ENCODE measurements at regions of chr17 and their contacts with region 1.

Region 1: DNA sequence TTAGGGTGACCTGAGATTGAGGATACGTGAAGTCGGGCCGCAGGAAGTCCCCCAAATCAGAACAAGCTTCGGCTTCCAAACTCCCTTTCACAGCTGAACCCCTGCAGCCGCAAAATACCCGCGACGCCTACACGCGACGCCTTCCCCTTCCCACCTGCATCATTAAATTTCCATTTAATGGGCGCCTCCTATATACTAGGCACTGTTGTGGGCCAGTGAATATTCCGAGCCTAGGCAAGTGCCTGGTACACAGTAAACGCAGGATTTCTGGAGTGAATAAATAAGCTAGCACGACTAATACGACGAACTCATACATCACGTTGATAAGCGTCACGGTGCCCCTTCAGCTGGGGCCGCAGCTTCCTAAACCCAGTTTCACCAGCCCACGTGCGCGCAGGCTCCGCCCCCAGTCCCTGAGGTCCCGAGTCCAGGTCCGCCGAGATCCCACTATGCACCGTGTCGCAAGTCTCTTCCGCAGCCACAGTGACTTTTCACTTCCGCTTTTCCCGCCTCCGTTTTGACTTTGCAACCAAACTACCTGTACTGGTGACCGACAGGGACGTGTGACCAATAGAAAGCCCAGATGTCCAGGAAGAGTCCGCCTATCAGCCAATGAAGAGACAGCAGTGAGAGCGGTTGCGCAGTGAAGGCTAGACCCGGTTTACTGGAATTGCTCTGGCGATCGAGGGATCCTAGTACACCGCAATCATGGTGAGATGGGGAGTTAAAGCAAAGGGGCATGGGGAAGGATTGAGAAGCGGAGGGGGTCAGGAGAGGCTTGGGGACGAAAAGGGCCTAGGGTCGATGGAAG is at the start of gene PSMB3:
- DNase-seq: peak; percentile 76 to 98 (median 96)
- ATAC-seq: peak; percentile 90
- H3K4me3 ChIP-seq: peak within 1 kb of the TSS; percentile 95
- H3K4me3 Mint-ChIP-seq: peak within 1 kb of the TSS; percentile 89 to 100 (median 98)
- H3K27ac ChIP-seq: peak within 1 kb of the TSS; percentile 83
- H3K27ac Mint-ChIP-seq: peak within 1 kb of the TSS; percentile 91 to 99 (median 97)
- H3K4me1 ChIP-seq: peaks cover 31 to 48% of the 10 kb centered on the region in 2 donors
- H3K4me1 Mint-ChIP-seq: peaks cover 37 to 56% (median 44%) of the 10 kb centered on the region in 7 donors
- H3K27me3 ChIP-seq: peaks cover 6 to 9% of the 10 kb centered on the region in 2 donors
- H3K27me3 Mint-ChIP-seq: peaks cover 12 to 32% (median 20%) of the 10 kb centered on the region in 5 donors
- total RNA-seq, gene PSMB3: 60.8 to 287 (median 92.1) TPM

Region 2: DNA sequence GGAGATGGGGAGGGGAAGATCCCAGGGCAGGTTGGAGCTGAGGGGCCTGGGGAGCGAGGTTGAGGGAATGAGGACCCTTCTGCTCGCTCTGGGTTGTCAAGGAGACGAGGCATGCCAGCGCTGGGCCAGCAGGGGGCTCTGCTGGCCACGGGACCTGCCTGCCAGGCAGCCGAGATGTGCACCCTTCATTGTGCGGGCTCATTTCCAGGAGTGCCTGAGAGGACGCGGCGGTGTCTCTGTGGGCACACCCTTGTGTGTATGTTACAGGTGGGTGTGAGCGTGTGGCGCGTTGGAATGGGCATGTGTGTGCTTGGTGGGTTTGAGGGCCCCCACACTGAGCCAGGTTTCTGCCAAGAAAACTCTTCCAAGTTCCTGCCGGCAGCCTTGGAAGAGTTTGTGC is 308.2 kb before region 1 on chr17:
- CTCF ChIA-PET with region 1: no interaction called
- POLR2A ChIA-PET with region 1: no interaction called
- intact Hi-C with region 1: no loop called
- DNase-seq: peak in 8 of 9 donors; percentile 21 to 60 (median 53)
- ATAC-seq: peak; percentile 77
- H3K4me3 ChIP-seq: no peak overlapping the region
- H3K4me3 Mint-ChIP-seq: peak overlapping the region in 5 of 10 donors; percentile 18 to 61 (median 48)
- H3K27ac ChIP-seq: no peak overlapping the region
- H3K27ac Mint-ChIP-seq: peak overlapping the region in 1 of 9 donors; percentile 10
- H3K4me1 ChIP-seq: peaks cover 0 to 8% of the 10 kb centered on the region in 2 donors
- H3K4me1 Mint-ChIP-seq: peaks cover 0 to 15% (median 11%) of the 10 kb centered on the region in 7 donors
- H3K27me3 ChIP-seq: no peaks in the 10 kb centered on the region
- H3K27me3 Mint-ChIP-seq: peaks cover 0 to 9% (median 2%) of the 10 kb centered on the region in 5 donors

Region 3: GRCh38 chr17:38582069-38582468 is 170.3 kb before region 1 on chr17:
- CTCF ChIA-PET with region 1: no interaction called
- POLR2A ChIA-PET with region 1: no interaction called
- intact Hi-C with region 1: no loop called
- DNase-seq: no peak
- ATAC-seq: no peak
- H3K4me3 ChIP-seq: no peak overlapping the region
- H3K4me3 Mint-ChIP-seq: no peak overlapping the region
- H3K27ac ChIP-seq: no peak overlapping the region
- H3K27ac Mint-ChIP-seq: no peak overlapping the region
- H3K4me1 ChIP-seq: peaks cover 4 to 7% of the 10 kb centered on the region in 2 donors
- H3K4me1 Mint-ChIP-seq: peaks cover 0 to 12% (median 8%) of the 10 kb centered on the region in 7 donors
- H3K27me3 ChIP-seq: peaks cover 13 to 14% of the 10 kb centered on the region in 2 donors
- H3K27me3 Mint-ChIP-seq: peaks cover 57 to 84% (median 64%) of the 10 kb centered on the region in 5 donors

Region 4: DNA sequence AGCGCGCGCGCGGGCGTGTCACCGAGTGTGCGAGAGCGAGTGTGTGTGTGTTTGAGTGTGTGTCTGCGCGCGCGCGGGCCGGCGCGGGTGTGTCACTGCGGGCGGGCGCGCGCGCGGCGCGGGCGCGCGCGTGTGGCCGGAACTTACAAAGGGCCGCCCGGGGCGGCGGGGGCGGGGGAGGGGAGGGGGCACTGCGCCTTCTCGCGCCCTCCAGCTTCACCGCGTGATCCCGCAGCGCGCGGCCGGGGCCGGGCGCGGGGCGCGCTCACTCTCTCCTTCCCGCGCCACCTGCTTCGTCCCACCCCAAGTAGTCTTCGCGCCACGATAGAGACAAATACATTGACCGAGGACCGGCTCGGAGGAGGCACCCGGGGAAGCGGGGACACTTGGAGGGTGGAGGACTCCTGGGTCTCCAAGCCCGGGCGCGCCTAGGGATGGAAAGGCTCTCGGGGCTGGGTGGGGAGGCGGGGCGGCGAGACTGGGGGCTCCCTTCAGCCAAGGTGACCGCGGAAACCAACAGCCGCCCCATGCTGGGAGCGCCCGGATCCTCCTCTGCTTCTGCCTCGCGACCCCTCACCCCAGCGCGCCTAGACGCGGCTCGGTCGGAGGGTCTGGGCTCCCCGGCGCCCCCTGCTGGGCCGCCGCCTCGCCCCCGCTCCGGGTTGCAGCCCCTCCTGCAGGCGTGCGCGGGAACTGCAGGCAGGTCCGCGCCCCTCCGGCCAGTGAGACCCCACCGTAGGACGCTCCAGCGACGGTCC is 146.3 kb before region 1 on chr17 and contains the start of gene SRCIN1:
- CTCF ChIA-PET with region 1: no interaction called
- POLR2A ChIA-PET with region 1: no interaction called
- intact Hi-C with region 1: no loop called
- DNase-seq: peak in 6 of 9 donors; percentile 26 to 74 (median 30)
- ATAC-seq: peak; percentile 74
- H3K4me3 ChIP-seq: peak within 1 kb of the TSS; percentile 50
- H3K4me3 Mint-ChIP-seq: peak within 1 kb of the TSS; percentile 54 to 81 (median 72)
- H3K27ac ChIP-seq: no peak within 1 kb of the TSS
- H3K27ac Mint-ChIP-seq: no peak within 1 kb of the TSS
- H3K4me1 ChIP-seq: peaks cover 9 to 11% of the 10 kb centered on the region in 2 donors
- H3K4me1 Mint-ChIP-seq: peaks cover 6 to 30% (median 13%) of the 10 kb centered on the region in 7 donors
- H3K27me3 ChIP-seq: peaks cover 10 to 37% of the 10 kb centered on the region in 2 donors
- H3K27me3 Mint-ChIP-seq: peaks cover 39 to 82% (median 50%) of the 10 kb centered on the region in 5 donors
- total RNA-seq, gene SRCIN1: 0.15 to 0.40 (median 0.23) TPM in 4 of 5 experiments, not detected in the other

Region 5: GRCh38 chr17:38674749-38675615 is 77.3 kb before region 1 on chr17 and contains the start of gene EPOP:
- CTCF ChIA-PET with region 1: interaction called, 4 read pairs
- POLR2A ChIA-PET with region 1: no interaction called
- intact Hi-C with region 1: loop called (anchors 1 kb)
- DNase-seq: peak; percentile 67 to 95 (median 71)
- ATAC-seq: peak; percentile 93
- H3K4me3 ChIP-seq: peak within 1 kb of the TSS; percentile 43
- H3K4me3 Mint-ChIP-seq: peak within 1 kb of the TSS; percentile 63 to 80 (median 75)
- H3K27ac ChIP-seq: peak within 1 kb of the TSS; percentile 54
- H3K27ac Mint-ChIP-seq: peak within 1 kb of the TSS in 4 of 9 donors; percentile 17 to 69 (median 58)
- H3K4me1 ChIP-seq: peaks cover 5 to 7% of the 10 kb centered on the region in 2 donors
- H3K4me1 Mint-ChIP-seq: peaks cover 8 to 30% (median 23%) of the 10 kb centered on the region in 7 donors
- H3K27me3 ChIP-seq: peaks cover 0 to 12% of the 10 kb centered on the region in 2 donors
- H3K27me3 Mint-ChIP-seq: peaks cover 19 to 37% (median 24%) of the 10 kb centered on the region in 5 donors
- total RNA-seq, gene EPOP: 0.19 to 13.4 (median 0.34) TPM

Region 6: DNA sequence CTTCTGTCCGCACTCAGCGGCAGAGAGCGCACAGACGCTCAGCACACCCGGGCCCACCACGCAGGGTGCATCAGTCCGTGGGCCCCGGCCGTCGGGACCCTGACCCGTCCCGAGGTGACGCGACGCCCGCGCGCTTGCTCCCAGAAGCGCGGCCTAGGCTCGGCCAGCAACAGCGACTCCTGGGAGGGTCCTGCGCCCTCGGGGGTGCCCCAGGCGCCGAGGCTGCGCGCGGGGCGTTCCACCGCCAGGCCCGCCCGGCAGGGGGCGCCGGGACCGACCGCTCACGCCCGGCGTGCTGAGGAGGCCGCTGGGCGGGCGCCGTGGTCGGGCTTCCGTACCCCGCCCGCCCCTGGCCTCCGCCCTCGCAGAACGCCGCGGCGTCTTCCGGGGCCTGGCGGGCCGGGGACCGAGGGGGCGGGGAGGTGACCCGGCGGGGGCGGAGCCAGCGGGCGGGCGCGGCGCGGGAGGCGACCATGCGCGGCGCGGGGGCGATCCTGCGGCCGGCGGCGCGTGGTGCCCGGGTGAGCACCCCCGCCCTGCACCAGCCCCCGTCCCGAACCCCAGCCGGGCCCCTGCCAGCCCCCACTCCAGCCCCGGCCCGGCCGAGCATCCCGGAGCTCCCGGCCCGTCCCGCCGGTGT is 22.3 kb before region 1 on chr17 and contains the start of gene CISD3:
- CTCF ChIA-PET with region 1: interaction called, 6 read pairs
- POLR2A ChIA-PET with region 1: interaction called, 21 read pairs
- intact Hi-C with region 1: loop called (anchors 1 kb)
- DNase-seq: peak; percentile 73 to 91 (median 84)
- ATAC-seq: peak; percentile 92
- H3K4me3 ChIP-seq: peak within 1 kb of the TSS; percentile 78
- H3K4me3 Mint-ChIP-seq: peak within 1 kb of the TSS; percentile 87 to 99 (median 95)
- H3K27ac ChIP-seq: peak within 1 kb of the TSS; percentile 81
- H3K27ac Mint-ChIP-seq: peak within 1 kb of the TSS; percentile 89 to 97 (median 93)
- H3K4me1 ChIP-seq: peaks cover 44 to 56% of the 10 kb centered on the region in 2 donors
- H3K4me1 Mint-ChIP-seq: peaks cover 40 to 91% (median 79%) of the 10 kb centered on the region in 7 donors
- H3K27me3 ChIP-seq: no peaks in the 10 kb centered on the region
- H3K27me3 Mint-ChIP-seq: peaks cover 0 to 2% (median 0%) of the 10 kb centered on the region in 5 donors
- total RNA-seq, gene CISD3: 8.0 to 39.6 (median 12.9) TPM

Region 7: GRCh38 chr17:38799378-38800236 is 47.3 kb after region 1 on chr17 and contains the start of gene PIP4K2B:
- CTCF ChIA-PET with region 1: no interaction called
- POLR2A ChIA-PET with region 1: interaction called, 4 read pairs
- intact Hi-C with region 1: loop called (anchors 1 kb)
- DNase-seq: peak; percentile 70 to 88 (median 78)
- ATAC-seq: peak; percentile 87
- H3K4me3 ChIP-seq: peak within 1 kb of the TSS; percentile 93
- H3K4me3 Mint-ChIP-seq: peak within 1 kb of the TSS; percentile 92 to 100 (median 96)
- H3K27ac ChIP-seq: peak within 1 kb of the TSS; percentile 81
- H3K27ac Mint-ChIP-seq: peak within 1 kb of the TSS; percentile 88 to 96 (median 92)
- H3K4me1 ChIP-seq: peaks cover 15 to 21% of the 10 kb centered on the region in 2 donors
- H3K4me1 Mint-ChIP-seq: peaks cover 31 to 48% (median 42%) of the 10 kb centered on the region in 7 donors
- H3K27me3 ChIP-seq: no peaks in the 10 kb centered on the region
- H3K27me3 Mint-ChIP-seq: no peaks in the 10 kb centered on the region
- total RNA-seq, gene PIP4K2B: 32.4 to 67.9 (median 49.1) TPM

Region 8: GRCh38 chr17:38853292-38854219 is 101.2 kb after region 1 on chr17 and contains the start of gene RPL23:
- CTCF ChIA-PET with region 1: no interaction called
- POLR2A ChIA-PET with region 1: interaction called, 6 read pairs
- intact Hi-C with region 1: loop called (anchors 1 kb)
- DNase-seq: peak; percentile 67 to 94 (median 91)
- ATAC-seq: peak; percentile 91
- H3K4me3 ChIP-seq: peak within 1 kb of the TSS; percentile 70
- H3K4me3 Mint-ChIP-seq: peak within 1 kb of the TSS; percentile 82 to 98 (median 96)
- H3K27ac ChIP-seq: peak within 1 kb of the TSS; percentile 89
- H3K27ac Mint-ChIP-seq: peak within 1 kb of the TSS; percentile 96 to 100 (median 99)
- H3K4me1 ChIP-seq: peaks cover 16 to 25% of the 10 kb centered on the region in 2 donors
- H3K4me1 Mint-ChIP-seq: peaks cover 34 to 53% (median 45%) of the 10 kb centered on the region in 7 donors
- H3K27me3 ChIP-seq: no peaks in the 10 kb centered on the region
- H3K27me3 Mint-ChIP-seq: no peaks in the 10 kb centered on the region
- total RNA-seq, gene RPL23: 1,312 to 2,438 (median 1,877) TPM

Region 9: DNA sequence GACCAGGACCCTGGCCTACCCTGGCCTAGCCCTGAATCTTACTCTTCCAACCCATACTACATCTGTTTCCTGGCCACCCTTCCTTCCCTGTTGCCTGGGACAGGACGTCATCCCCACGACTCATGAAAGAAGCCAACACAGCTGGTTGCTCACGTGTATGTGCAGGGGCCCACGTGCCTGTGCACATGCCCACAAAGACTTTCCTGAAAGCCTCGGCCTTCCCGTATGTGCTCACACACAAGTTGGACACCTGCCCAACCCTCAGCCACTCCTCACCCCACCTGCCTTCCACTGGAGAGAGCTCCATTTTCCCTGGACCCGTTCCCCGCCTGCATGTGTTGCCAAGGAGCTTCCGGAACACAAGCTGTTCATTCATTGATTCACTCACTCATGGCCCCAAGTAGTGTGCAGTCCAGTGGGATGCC is 392.1 kb after region 1 on chr17:
- CTCF ChIA-PET with region 1: no interaction called
- POLR2A ChIA-PET with region 1: no interaction called
- intact Hi-C with region 1: no loop called
- DNase-seq: no peak
- ATAC-seq: no peak
- H3K4me3 ChIP-seq: no peak overlapping the region
- H3K4me3 Mint-ChIP-seq: no peak overlapping the region
- H3K27ac ChIP-seq: no peak overlapping the region
- H3K27ac Mint-ChIP-seq: peak overlapping the region in 7 of 9 donors; percentile 0 to 70 (median 43)
- H3K4me1 ChIP-seq: peaks cover 0 to 5% of the 10 kb centered on the region in 2 donors
- H3K4me1 Mint-ChIP-seq: peaks cover 0 to 40% (median 26%) of the 10 kb centered on the region in 7 donors
- H3K27me3 ChIP-seq: no peaks in the 10 kb centered on the region
- H3K27me3 Mint-ChIP-seq: peaks cover 0 to 12% (median 0%) of the 10 kb centered on the region in 5 donors

Region 10: DNA sequence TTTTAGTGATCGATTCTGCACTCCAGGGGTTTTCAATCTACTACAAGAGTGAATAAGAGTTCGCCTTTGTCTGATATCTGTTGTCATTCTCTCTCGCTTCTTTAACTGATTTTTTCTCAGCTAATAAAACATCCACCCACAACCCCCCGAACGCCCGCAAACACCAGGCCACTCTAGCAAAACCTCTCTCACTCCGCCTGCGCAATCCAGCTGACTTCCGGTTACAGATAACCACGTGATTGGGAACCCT is 447.4 kb after region 1 on chr17:
- CTCF ChIA-PET with region 1: no interaction called
- POLR2A ChIA-PET with region 1: interaction called, 6 read pairs
- intact Hi-C with region 1: loop called in 1 of 2 experiments (anchors 1 kb)
- DNase-seq: peak in 7 of 9 donors; percentile 61 to 93 (median 89)
- ATAC-seq: peak; percentile 85
- H3K4me3 ChIP-seq: peak overlapping the region; percentile 83
- H3K4me3 Mint-ChIP-seq: peak overlapping the region; percentile 87 to 98 (median 92)
- H3K27ac ChIP-seq: peak overlapping the region; percentile 98
- H3K27ac Mint-ChIP-seq: peak overlapping the region; percentile 93 to 100 (median 99)
- H3K4me1 ChIP-seq: peaks cover 42 to 46% of the 10 kb centered on the region in 2 donors
- H3K4me1 Mint-ChIP-seq: peaks cover 38 to 72% (median 54%) of the 10 kb centered on the region in 7 donors
- H3K27me3 ChIP-seq: no peaks in the 10 kb centered on the region
- H3K27me3 Mint-ChIP-seq: no peaks in the 10 kb centered on the region

Measured in naive thymus-derived CD4-positive, alpha-beta T cell (primary cell).